SK-N-SH (cell line): ENCODE measurements at regions of chr19 and their contacts with region 1.

Region 1: DNA sequence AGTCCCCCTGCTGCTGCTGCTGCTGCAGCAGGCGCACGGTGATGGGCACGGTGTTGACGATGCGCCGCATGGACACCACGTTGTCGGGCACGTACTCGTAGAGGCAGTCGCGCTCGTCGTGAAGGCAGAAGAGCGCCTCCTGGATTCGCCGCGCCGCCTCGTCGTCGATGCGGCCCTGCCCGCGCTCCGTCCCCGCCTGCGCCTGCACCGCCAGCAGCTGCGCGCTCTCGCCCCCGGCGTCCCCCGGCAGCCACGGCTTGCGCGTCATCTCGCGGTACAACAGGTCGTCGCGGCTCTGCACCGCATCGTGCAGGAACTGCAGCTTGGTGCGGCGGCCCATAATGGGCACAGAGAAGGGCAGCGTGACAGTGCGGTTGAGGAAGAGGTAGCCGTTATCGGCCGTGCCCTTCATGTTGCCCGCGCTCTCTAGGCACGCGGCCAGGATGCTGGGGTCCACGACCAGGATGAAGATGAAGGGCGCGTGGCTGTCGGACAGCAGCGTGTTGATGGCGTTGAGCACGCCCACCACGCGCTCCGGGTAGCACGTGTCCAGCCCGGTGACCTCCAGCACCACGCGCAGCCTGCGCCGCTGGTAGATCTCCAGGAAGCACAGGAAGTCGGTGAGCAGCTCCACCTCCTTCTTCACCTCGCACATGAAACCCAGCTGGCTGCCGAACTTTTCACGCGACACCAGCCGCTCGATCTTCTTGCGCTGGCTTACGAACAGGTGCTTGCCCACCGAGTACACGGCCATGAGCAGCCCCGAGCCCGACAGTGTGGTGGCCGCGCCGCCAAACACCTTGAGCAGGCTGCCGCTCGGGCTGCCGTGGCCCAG is 8.1 kb downstream of the NKPD1 start:
- DNase-seq: peak; percentile 80
- H3K4me3 ChIP-seq: peak overlapping the region in 1 of 2 experiments; percentile 13; a peak in 1 of 4 replicates
- H3K27ac ChIP-seq: no peak overlapping the region
- H3K4me1 ChIP-seq: peaks cover 0 to 17% of the 10 kb centered on the region in 2 experiments; a peak in 1 of 4 replicates
- H3K27me3 ChIP-seq: no peaks in the 10 kb centered on the region; the same call in 1 of the 2 replicates
- CTCF ChIP-seq: peak; percentile 21
- EP300 ChIP-seq: no peak
- RAD21 ChIP-seq: no peak

Region 2: DNA sequence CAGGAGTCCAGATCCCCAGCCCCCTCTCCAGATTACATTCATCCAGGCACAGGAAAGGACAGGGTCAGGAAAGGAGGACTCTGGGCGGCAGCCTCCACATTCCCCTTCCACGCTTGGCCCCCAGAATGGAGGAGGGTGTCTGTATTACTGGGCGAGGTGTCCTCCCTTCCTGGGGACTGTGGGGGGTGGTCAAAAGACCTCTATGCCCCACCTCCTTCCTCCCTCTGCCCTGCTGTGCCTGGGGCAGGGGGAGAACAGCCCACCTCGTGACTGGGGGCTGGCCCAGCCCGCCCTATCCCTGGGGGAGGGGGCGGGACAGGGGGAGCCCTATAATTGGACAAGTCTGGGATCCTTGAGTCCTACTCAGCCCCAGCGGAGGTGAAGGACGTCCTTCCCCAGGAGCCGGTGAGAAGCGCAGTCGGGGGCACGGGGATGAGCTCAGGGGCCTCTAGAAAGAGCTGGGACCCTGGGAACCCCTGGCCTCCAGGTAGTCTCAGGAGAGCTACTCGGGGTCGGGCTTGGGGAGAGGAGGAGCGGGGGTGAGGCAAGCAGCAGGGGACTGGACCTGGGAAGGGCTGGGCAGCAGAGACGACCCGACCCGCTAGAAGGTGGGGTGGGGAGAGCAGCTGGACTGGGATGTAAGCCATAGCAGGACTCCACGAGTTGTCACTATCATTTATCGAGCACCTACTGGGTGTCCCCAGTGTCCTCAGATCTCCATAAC is 247.1 kb before region 1 on chr19 and contains the start of gene APOE:
- CTCF ChIA-PET with region 1: no interaction called
- POLR2A ChIA-PET with region 1: no interaction called
- DNase-seq: peak; percentile 57
- H3K4me3 ChIP-seq: peak within 1 kb of the TSS in 1 of 2 experiments; percentile 36; a peak in 2 of 4 replicates
- H3K27ac ChIP-seq: no peak within 1 kb of the TSS
- H3K4me1 ChIP-seq: peaks cover 0 to 12% of the 10 kb centered on the region in 2 experiments; a peak in 1 of 4 replicates
- H3K27me3 ChIP-seq: no peaks in the 10 kb centered on the region
- CTCF ChIP-seq: no peak
- EP300 ChIP-seq: no peak
- RAD21 ChIP-seq: no peak
- polyA plus RNA-seq, gene APOE: 56.0 and 65.7 TPM in 2 replicates

Region 3: DNA sequence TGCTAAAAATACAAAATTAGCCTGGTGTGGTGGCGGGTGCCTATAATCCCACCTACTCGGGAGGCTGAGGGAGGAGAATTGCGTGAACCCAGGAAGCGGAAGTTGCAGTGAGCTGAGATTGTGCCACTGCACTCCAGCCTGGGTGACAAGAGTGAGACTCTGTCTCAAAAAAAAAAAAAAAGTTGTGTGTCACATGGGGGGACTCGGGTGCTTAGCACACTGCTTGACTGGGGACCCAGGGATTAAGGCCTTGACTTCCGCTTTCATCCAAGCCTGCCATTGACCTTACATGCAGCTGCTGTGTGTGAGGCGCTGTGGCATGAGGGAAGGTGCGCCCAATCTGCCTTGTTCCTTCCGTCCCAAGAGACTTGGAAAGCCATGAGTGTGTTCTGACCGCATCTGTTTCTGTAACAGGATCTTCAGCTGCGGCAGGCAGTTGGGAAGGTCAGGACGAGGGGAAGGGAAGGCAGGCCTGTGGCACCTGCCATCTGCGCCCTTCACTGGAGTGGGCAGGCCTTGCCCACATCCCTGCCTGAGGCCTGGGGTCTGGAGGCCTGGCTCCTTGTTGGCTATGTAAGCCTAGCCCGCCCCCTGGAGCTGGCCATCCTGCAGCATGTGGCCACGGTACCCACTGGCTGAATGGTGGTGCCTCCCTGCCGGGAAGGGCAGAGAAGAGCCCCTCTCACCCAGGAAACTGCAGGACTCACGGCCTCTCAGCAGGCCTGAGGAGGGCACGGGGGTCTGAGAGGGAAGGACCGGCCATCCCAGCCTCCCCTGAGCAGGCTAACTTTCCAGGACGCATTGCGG is 36.7 kb before region 1 on chr19:
- CTCF ChIA-PET with region 1: no interaction called
- POLR2A ChIA-PET with region 1: no interaction called
- DNase-seq: no peak
- H3K4me3 ChIP-seq: no peak overlapping the region
- H3K27ac ChIP-seq: no peak overlapping the region
- H3K4me1 ChIP-seq: peaks cover 0 to 5% of the 10 kb centered on the region in 2 experiments; a peak in 1 of 4 replicates
- H3K27me3 ChIP-seq: no peaks in the 10 kb centered on the region
- CTCF ChIP-seq: no peak
- EP300 ChIP-seq: no peak
- RAD21 ChIP-seq: no peak

Region 4: DNA sequence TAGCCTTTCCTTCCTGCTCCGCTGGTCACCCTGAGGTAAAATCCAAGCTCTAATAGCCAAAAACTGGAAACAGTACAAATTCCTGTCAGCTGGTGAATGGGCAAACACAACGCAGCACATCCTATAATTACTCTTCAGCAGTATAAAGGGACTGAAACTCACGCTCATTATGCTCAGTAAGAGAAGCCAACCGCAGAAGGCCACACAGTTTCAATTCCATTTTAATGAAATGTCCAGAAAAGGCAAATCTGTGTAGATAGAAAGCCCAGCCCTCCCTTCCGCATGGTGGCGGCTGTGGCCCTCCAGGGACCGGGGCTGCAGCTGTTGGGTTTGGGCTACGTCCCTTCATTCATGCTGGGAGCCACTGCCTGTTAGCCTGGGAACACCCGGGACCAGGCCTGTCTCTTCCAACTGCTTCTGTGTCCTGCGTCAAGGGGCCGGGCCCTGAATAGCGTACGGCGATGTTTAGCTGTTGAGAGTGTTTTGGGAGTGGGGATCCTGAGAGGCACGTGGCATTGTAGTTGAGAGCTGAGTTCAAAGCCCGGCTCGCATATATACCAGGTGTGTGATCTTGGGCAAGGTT is 15.5 kb before region 1 on chr19:
- CTCF ChIA-PET with region 1: interaction called, 21 read pairs
- POLR2A ChIA-PET with region 1: interaction called, 3 read pairs
- DNase-seq: peak; percentile 63
- H3K4me3 ChIP-seq: no peak overlapping the region
- H3K27ac ChIP-seq: peak overlapping the region in 1 of 2 experiments; percentile 75; a peak in 2 of 4 replicates
- H3K4me1 ChIP-seq: peaks cover 0 to 23% of the 10 kb centered on the region in 2 experiments; a peak in 1 of 4 replicates
- H3K27me3 ChIP-seq: no peaks in the 10 kb centered on the region
- CTCF ChIP-seq: no peak
- EP300 ChIP-seq: no peak
- RAD21 ChIP-seq: no peak

Region 5: DNA sequence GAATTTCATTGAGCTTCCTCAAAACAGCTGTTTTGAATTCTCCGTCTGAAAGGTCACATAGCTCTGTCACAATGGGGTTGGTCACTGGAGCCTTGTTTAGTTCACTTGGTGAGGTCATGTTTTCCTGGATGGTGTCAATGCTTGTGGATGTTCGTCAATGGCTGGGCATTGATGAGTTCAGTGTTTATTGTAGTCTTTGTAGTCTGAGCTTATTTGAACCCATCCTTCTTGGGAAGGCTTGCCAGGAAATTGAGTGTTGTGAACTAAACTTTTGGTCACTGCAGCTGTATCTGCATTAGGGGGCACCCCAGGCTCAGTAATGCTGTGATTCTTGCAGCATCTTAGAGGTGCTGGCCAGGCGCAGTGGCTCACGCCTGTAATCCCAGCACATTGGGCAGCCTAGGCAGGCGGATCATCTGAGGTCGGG is 47.9 kb after region 1 on chr19:
- CTCF ChIA-PET with region 1: no interaction called
- POLR2A ChIA-PET with region 1: no interaction called
- DNase-seq: no peak
- H3K4me3 ChIP-seq: no peak overlapping the region
- H3K27ac ChIP-seq: no peak overlapping the region
- H3K4me1 ChIP-seq: no peaks in the 10 kb centered on the region
- H3K27me3 ChIP-seq: no peaks in the 10 kb centered on the region
- CTCF ChIP-seq: peak; percentile 46
- EP300 ChIP-seq: no peak
- RAD21 ChIP-seq: peak; percentile 68